A673 (cell line): ENCODE measurements at regions of chr15 and their contacts with region 1.

Region 1: DNA sequence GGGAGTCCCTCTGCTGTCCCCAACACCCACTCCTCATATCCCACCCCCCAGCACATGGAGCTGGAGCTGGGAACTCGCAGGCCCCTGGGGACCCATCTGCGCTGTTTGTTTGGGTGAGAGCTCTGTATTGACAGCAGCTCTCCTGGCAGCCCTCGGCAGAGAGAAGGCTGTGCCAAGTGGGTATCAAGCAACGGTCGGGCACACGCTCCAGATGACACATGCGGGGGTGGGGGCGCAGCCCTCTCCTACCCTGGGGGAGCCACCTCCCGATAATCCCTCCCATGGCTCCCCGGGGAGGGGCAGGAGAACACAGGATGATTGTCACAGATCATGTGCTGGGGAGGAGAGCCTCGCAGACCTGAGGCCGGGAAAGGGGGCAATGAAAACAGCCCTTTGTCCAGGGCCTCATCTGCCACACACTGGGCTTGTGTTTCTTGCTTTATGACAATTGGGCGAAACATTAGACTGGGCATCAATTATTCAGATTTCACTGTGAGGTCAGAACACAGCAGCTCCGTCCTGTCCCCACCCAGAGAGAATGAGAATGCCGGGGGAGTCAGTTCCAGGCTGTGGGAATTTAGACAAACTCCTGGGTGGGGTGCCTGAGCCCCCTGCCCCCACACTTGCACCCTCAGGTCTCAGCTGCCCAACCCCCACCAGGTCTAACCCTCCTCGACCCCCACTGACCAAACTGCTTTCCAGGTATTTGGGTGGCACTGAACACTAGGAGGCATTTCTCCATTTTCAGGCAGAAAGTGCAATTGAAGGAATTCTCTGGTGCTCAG is 46.4 kb upstream of the KLF13 start:
- DNase-seq: peak; percentile 11
- H3K4me3 ChIP-seq: no peak overlapping the region
- H3K27ac ChIP-seq: no peak overlapping the region
- H3K4me1 ChIP-seq: no peaks in the 10 kb centered on the region
- H3K27me3 ChIP-seq: no peaks in the 10 kb centered on the region
- CTCF ChIP-seq: no peak

Region 2: GRCh38 chr15:31200735-31201151 is 79.5 kb before region 1 on chr15:
- CTCF ChIA-PET with region 1: no interaction called
- POLR2A ChIA-PET with region 1: no interaction called
- intact Hi-C with region 1: loop called (anchors 10 kb)
- DNase-seq: peak; percentile 52
- H3K4me3 ChIP-seq: no peak overlapping the region
- H3K27ac ChIP-seq: no peak overlapping the region
- H3K4me1 ChIP-seq: no peaks in the 10 kb centered on the region
- H3K27me3 ChIP-seq: no peaks in the 10 kb centered on the region
- CTCF ChIP-seq: peak; percentile 56; the same call in 1 of the 2 replicates

Region 3: DNA sequence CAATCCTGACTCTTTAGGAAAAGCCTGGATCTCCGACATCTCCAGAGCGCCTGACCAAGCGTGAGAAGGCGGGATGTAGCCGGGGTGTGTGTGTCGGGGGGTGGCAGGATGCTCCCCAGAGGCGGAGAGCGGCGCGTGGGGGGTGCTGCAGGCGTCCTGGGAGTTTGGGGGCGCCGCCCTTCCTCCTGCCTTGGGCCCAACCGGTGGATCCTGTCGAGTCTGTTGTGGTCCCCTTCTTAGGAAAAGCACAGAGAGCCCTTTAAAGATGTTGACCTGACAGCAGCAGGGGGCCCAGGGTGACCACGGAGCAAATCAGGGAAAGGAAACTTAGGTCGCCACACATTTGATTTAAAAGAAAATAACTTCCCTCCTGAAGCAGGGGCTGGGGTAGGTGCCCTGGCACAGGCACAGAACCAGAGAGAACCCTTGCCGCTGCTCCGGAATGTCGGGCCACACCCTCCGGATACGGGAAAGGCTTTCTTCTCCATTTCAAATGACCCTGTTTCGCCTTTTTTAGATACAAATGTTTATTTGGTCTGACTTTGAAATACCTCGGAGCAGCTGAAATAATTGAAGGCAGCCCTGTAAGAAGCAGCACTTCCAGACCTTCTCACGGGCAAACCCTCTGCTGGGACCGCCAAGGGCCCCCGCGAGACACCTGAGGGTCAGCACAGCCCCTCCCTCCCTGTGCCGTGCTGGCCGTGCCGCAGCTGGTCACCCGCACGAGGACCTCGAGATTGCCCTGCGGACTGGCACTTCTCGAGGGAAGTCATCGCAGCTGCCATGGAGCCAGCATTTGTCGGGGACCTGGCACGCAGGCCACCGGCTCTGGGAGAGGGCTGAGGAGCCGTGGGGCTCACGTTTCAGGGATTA is 56.5 kb before region 1 on chr15:
- CTCF ChIA-PET with region 1: no interaction called
- POLR2A ChIA-PET with region 1: no interaction called
- intact Hi-C with region 1: no loop called
- DNase-seq: no peak
- H3K4me3 ChIP-seq: no peak overlapping the region
- H3K27ac ChIP-seq: no peak overlapping the region
- H3K4me1 ChIP-seq: no peaks in the 10 kb centered on the region
- H3K27me3 ChIP-seq: no peaks in the 10 kb centered on the region
- CTCF ChIP-seq: no peak

Region 4: GRCh38 chr15:31245135-31245689 is 35.0 kb before region 1 on chr15:
- CTCF ChIA-PET with region 1: no interaction called
- POLR2A ChIA-PET with region 1: no interaction called
- intact Hi-C with region 1: loop called (anchors 5 kb)
- DNase-seq: no peak
- H3K4me3 ChIP-seq: no peak overlapping the region
- H3K27ac ChIP-seq: no peak overlapping the region
- H3K4me1 ChIP-seq: no peaks in the 10 kb centered on the region
- H3K27me3 ChIP-seq: no peaks in the 10 kb centered on the region
- CTCF ChIP-seq: no peak

Region 5: DNA sequence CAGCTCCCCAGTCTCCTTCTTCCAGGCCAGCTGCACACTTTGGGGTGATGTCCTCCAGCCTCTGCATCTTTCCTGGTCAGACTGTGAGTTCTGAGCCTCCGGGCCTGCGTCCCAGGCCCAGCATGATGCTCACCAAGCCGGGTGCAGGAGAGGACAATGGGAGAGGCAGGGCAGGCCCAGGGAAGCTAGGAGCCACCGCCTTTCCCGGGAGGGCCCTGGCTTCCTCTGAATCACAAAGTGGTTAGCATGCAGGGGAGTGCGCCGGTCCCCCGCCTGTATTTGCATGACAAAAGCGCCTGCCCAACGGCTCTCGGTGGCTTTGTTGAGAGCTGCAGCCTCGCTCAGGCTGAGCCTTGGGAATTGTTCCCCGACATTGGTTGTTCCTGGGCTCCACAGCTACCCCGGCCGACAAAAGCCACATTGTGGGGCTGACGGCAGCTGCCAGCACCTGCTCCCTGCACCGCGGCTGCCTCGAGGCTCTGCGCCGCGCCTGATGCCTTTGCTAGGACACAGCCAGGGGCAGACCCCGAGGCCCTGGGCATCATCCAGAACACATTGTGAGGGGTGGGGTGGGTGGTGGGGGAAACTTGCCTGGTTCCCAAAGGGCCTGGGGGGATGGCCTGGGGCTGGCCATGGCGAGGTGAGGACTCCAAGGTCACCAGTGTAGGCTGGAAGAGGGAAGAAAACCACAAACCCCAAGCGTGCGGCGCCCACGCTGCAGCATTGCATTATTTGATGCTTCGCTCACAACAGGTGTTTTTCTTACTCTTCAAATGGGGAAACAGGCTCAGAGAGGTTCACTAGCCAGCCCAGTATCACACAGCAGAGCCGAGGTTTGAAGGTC is 26.4 kb after region 1 on chr15:
- CTCF ChIA-PET with region 1: no interaction called
- POLR2A ChIA-PET with region 1: no interaction called
- intact Hi-C with region 1: no loop called
- DNase-seq: peak; percentile 68
- H3K4me3 ChIP-seq: no peak overlapping the region
- H3K27ac ChIP-seq: no peak overlapping the region
- H3K4me1 ChIP-seq: peaks cover 16% of the 10 kb centered on the region
- H3K27me3 ChIP-seq: no peaks in the 10 kb centered on the region
- CTCF ChIP-seq: no peak